Left ventricle myocardium superior (tissue), 1 donor: ENCODE measurements at regions of chr11 and their contacts with region 1.

Region 1: GRCh38 chr11:58579192-58580129 is 598 bp downstream of the ZFP91 start:
- DNase-seq: peak; percentile 94
- ATAC-seq: peak; percentile 75

Region 2: GRCh38 chr11:58152781-58153180 is 426.7 kb before region 1 on chr11:
- intact Hi-C with region 1: no loop called
- DNase-seq: no peak
- ATAC-seq: no peak

Region 3: DNA sequence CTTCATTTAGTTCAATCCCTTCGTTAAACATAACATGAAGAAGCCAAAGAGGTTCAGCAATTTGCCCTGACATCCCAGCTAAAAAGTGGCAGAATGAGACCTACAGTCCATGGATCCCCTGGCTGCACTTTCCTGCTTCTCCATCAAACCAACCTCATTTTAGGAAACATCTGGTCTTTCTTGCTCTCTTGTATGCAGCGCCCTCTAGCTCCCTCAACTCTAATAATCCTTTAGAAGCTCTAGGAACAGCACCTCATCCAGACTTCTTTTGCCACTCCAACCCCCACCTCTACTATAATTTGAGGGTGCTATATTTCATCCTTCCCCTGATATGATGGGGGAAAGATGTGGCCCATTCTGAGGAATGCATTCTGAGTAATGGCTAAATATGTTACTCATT is 50.4 kb after region 1 on chr11:
- intact Hi-C with region 1: loop called (anchors 10 kb)
- DNase-seq: no peak
- ATAC-seq: peak; percentile 42